Mammary epithelial cell (primary cell): ENCODE measurements at regions of chr1 and their contacts with region 1.

Region 1: DNA sequence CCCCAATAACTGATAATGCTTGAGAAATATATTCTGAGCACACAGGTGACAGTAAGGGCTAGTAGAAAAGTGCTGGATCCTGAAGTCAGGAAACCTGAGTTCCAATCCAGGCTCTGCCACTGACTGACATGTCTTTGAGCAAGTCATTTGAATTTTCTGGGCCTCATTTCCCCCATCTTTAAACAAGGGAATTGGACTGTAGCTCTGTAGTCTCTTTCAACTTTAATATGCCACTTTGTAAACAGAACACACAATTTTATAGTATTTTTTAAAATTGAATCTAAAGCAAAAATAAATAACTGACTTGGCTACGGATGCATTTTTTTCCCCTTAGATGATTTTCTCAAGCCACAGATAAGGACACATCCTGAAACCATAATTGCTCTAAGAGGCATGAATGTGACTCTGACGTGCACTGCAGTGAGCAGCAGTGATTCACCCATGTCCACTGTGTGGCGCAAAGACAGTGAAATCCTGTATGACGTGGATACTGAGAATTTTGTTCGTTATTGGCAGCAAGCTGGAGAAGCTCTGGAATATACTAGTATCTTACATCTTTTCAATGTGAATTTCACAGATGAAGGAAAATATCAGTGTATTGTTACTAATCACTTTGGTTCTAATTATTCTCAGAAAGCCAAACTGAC is 37.0 kb downstream of the LRIG2 start:
- DNase-seq: peak; percentile 35
- H3K4me3 ChIP-seq: no peak overlapping the region
- H3K27ac ChIP-seq: no peak overlapping the region
- H3K4me1 ChIP-seq: no peaks in the 10 kb centered on the region
- H3K27me3 ChIP-seq: no peaks in the 10 kb centered on the region
- CTCF ChIP-seq: peak in 1 of 2 donors; percentile 6

Region 2: DNA sequence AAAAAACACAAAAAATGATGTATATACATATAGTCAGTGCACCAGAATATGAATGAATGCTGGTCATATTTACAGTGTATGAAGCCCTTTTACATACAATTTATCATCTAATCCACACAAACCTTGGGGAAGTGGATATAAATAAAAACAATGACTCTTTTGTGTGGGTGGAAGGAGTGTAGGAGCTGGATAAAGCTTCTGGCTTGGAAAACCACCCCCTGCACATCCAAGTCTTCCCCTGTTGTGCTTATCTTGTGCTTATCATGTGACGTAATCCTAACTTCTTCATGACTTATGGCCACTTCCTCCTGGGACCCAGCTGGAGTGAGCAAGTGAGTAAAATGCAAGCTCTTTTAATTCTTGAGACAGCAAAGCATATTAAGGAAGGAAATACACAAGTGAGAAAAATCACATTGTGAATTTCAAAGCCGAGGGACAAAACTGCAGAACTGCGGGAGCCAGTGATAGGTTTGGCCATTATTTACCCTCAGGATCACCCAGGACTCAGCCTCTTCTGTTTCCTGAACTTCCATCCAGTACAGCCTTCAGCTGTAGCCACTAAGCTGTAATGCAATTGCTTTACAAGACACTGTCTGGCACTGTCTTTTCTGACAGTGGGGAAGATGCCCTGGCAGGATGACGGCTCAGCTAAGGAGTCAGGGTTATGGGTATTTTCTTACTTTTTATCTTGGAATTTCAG is 290.9 kb before region 1 on chr1:
- CTCF ChIA-PET with region 1: no interaction called
- dilution Hi-C with region 1: loop called (anchors 10 kb)
- in situ Hi-C with region 1: no loop called
- intact Hi-C with region 1: no loop called
- DNase-seq: no peak
- H3K4me3 ChIP-seq: no peak overlapping the region
- H3K27ac ChIP-seq: no peak overlapping the region
- H3K4me1 ChIP-seq: no peaks in the 10 kb centered on the region
- H3K27me3 ChIP-seq: no peaks in the 10 kb centered on the region
- CTCF ChIP-seq: no peak

Region 3: GRCh38 chr1:113057006-113057405 is 53.0 kb before region 1 on chr1:
- CTCF ChIA-PET with region 1: no interaction called
- dilution Hi-C with region 1: loop called (anchors 10 kb)
- in situ Hi-C with region 1: no loop called
- intact Hi-C with region 1: no loop called
- DNase-seq: no peak
- H3K4me3 ChIP-seq: no peak overlapping the region
- H3K27ac ChIP-seq: no peak overlapping the region
- H3K4me1 ChIP-seq: no peaks in the 10 kb centered on the region
- H3K27me3 ChIP-seq: no peaks in the 10 kb centered on the region
- CTCF ChIP-seq: no peak

Region 4: DNA sequence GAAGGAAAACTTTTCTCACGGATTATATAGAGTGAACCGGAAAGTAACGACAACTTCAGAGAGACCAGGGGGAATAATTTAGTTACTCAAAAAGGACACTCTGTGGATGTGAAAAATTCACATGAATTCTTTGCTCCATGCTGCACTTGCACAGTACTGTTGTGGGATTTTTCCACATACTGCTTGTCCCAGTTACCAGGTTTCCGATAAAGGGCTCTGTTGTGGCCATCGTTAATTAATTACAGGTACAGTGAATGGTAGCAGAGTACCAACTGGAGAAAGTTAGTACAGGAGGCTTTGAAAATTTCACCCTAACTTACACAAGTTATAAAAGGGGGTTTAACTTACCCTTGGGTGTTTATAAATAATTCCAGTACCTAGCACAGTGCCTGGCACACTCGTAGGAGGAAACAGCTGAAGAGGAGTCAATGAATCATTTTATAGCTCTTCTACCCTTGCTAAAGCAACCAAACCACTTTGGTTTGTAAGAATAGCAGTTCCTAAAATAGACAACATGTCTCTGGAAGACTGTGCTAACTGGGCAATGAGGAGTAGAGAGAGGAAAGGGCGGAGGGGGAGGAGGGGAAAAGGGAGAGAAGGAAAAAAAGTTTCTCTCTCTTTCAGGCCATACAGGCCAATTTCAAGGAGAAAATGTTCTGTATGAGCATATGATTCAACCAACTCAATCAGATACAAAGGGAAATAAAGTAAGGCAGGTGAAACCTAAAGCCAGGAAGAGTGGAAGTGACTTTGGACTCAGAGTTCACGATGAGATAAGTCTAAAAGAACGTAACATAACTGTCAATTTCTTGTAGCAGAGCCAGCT is 182.0 kb after region 1 on chr1:
- CTCF ChIA-PET with region 1: no interaction called
- dilution Hi-C with region 1: no loop called
- in situ Hi-C with region 1: no loop called
- intact Hi-C with region 1: no loop called
- DNase-seq: no peak
- H3K4me3 ChIP-seq: no peak overlapping the region
- H3K27ac ChIP-seq: no peak overlapping the region
- H3K4me1 ChIP-seq: no peaks in the 10 kb centered on the region
- H3K27me3 ChIP-seq: no peaks in the 10 kb centered on the region
- CTCF ChIP-seq: no peak